Heart left ventricle (tissue), 16 donors: ENCODE measurements at regions of chr22 and their contacts with region 1.

Region 1: GRCh38 chr22:40856513-40857308 is at the starts of genes ST13 and XPNPEP3:
- DNase-seq: peak; percentile 98 to 99 (median 98)
- ATAC-seq: peak; percentile 97 to 99 (median 99)
- H3K4me3 ChIP-seq: peak within 1 kb of the TSS; percentile 60 to 98 (median 86)
- H3K27ac ChIP-seq: peak within 1 kb of the TSS; percentile 94 to 99 (median 97)
- H3K4me1 ChIP-seq: peaks cover 4 to 55% (median 43%) of the 10 kb centered on the region in 12 donors
- H3K27me3 ChIP-seq: no peaks in the 10 kb centered on the region
- CTCF ChIP-seq: peak in 8 of 12 donors; percentile 5 to 43 (median 22)
- POLR2A ChIP-seq: peak in 1 of 2 donors; percentile 76
- total RNA-seq, gene ST13: 108 to 231 (median 205) TPM
- total RNA-seq, gene XPNPEP3: 14.8 to 37.9 (median 23.0) TPM

Region 2: DNA sequence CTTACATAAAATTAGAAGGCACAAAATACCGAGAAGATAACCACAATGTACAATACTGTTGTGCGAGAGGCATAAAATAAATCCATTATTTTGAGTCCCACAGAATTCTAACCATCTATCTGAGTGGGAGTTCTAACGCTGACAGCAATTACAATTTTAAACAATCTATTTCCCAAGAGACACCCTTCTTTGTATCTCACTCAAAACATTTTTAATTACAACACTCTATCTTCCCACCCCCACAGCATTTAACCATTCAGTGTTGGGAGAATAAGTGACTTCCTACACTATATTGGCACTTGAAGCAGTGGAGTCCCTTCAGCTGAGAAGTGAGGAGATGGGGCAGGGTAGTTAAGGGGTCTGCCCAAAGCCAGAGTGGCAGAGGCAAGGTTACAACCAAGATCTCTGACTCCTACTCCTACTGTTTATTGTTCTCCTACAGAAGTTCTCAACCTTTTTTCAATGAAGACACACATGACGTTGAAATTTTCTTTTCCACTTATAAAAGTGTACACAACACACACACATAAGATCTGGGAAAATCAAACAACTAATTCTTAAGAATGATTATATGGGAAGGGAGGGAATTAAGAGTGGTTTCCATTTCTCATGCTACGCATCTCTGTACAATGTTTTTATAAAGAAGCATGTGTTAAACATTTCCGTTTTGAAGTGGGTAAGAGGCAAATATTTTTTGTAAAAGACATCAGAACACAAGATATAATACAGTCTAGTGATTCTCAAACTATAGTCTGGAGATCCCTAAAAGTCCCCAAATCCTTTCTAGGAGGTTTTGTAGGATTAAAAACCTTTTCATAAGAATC is 48.5 kb before region 1 on chr22:
- intact Hi-C with region 1: no loop called
- DNase-seq: no peak
- ATAC-seq: no peak
- H3K4me3 ChIP-seq: no peak overlapping the region
- H3K27ac ChIP-seq: no peak overlapping the region
- H3K4me1 ChIP-seq: peaks cover 0 to 5% (median 0%) of the 10 kb centered on the region in 12 donors
- H3K27me3 ChIP-seq: no peaks in the 10 kb centered on the region
- CTCF ChIP-seq: no peak
- POLR2A ChIP-seq: no peak

Region 3: DNA sequence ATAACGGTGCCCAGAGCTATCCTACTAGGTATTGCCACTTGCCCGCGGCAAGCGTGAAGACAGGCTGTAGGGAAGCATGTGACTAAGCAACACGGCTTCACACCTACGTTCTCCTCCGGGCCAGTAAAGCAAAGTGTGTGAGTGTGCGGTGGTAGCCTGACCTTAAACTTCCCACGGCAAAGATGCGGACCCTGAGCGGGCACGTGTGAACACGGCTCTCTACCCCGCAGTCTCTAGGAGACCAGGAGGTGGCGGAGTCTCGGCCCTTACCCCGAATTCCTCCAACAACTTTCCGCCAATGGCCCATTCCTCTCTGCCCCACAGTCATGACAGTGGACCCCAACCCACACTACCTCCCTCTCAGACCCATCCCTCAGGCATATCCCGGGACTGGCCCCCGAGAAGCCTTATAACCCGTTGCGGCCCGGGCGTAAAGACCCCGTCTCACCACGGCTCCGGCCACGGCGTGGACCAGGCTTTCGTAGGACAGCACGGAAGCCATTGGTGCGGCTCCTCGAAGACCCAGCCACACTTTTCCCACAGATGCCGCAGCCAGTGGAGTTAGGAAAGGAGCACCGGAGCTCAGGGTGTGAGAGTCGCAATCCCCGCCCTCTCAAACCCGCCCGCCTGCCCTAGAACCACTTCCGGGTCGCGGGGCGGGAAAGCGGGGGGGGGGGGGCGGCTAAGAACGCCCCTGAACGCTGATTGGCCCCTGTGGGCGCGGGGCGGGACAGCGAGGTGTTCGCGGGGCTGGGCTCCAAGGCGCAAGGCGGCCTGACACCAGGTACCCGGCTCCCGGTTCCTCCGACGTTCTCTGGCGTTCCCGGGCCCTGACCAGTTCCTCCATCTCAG is 37.7 kb before region 1 on chr22 and contains the start of gene SLC25A17:
- intact Hi-C with region 1: loop called in 3 of 10 experiments (anchors 2 to 5 kb)
- DNase-seq: peak; percentile 89 to 94 (median 92)
- ATAC-seq: peak; percentile 98 to 99 (median 98)
- H3K4me3 ChIP-seq: peak within 1 kb of the TSS; percentile 57 to 99 (median 82)
- H3K27ac ChIP-seq: peak within 1 kb of the TSS in 11 of 12 donors; percentile 31 to 88 (median 77)
- H3K4me1 ChIP-seq: peaks cover 0 to 27% (median 19%) of the 10 kb centered on the region in 12 donors
- H3K27me3 ChIP-seq: no peaks in the 10 kb centered on the region
- CTCF ChIP-seq: peak in 8 of 12 donors; percentile 21 to 54 (median 34)
- POLR2A ChIP-seq: peak in 1 of 2 donors; percentile 50
- total RNA-seq, gene SLC25A17: 2.3 to 7.6 (median 4.0) TPM